ENCODE measurements at regions of chr20 and their contacts with region 1.

Region 1: GRCh38 chr20:8389381-8390036 is 257.4 kb downstream of the PLCB1 start:
- DNase-seq: no peak
- ATAC-seq: peak; percentile 70

Region 2: GRCh38 chr20:8049310-8049709 is 340.2 kb before region 1 on chr20:
- intact Hi-C with region 1: loop called (anchors 5 kb)
- DNase-seq: no peak
- ATAC-seq: no peak

Region 3: GRCh38 chr20:8131598-8132483 is 257.7 kb before region 1 on chr20 and contains the start of gene PLCB1:
- intact Hi-C with region 1: loop called (anchors 2 kb)
- DNase-seq: peak; percentile 91
- ATAC-seq: peak; percentile 94
- total RNA-seq, gene PLCB1: 6.3 TPM

Measured in Right ventricle myocardium superior (tissue), 1 donor.